WTC11 (cell line): ENCODE measurements at regions of chr10 and their contacts with region 1.

Region 1: GRCh38 chr10:86936661-86937501 is 20.5 kb downstream of the MMRN2 start:
- DNase-seq: peak; percentile 7
- ATAC-seq: no peak
- H3K4me3 Mint-ChIP-seq: no peak overlapping the region
- H3K27ac Mint-ChIP-seq: 0 out of 2 replicates have a peak overlapping the region, but pooled peaks have one; percentile 33
- H3K4me1 Mint-ChIP-seq: no peaks in the 10 kb centered on the region; the same call in 1 of the 2 replicates
- H3K27me3 Mint-ChIP-seq: no peaks in the 10 kb centered on the region
- CTCF ChIP-seq: no peak

Region 2: GRCh38 chr10:86868353-86868752 is 68.5 kb before region 1 on chr10:
- CTCF ChIA-PET with region 1: no interaction called
- POLR2A ChIA-PET with region 1: interaction called, 10 read pairs
- DNase-seq: peak; percentile 85
- ATAC-seq: peak; percentile 86
- H3K4me3 Mint-ChIP-seq: peak overlapping the region; percentile 22
- H3K27ac Mint-ChIP-seq: peak overlapping the region; percentile 99
- H3K4me1 Mint-ChIP-seq: peaks cover 90% of the 10 kb centered on the region
- H3K27me3 Mint-ChIP-seq: no peaks in the 10 kb centered on the region
- CTCF ChIP-seq: no peak

Region 3: DNA sequence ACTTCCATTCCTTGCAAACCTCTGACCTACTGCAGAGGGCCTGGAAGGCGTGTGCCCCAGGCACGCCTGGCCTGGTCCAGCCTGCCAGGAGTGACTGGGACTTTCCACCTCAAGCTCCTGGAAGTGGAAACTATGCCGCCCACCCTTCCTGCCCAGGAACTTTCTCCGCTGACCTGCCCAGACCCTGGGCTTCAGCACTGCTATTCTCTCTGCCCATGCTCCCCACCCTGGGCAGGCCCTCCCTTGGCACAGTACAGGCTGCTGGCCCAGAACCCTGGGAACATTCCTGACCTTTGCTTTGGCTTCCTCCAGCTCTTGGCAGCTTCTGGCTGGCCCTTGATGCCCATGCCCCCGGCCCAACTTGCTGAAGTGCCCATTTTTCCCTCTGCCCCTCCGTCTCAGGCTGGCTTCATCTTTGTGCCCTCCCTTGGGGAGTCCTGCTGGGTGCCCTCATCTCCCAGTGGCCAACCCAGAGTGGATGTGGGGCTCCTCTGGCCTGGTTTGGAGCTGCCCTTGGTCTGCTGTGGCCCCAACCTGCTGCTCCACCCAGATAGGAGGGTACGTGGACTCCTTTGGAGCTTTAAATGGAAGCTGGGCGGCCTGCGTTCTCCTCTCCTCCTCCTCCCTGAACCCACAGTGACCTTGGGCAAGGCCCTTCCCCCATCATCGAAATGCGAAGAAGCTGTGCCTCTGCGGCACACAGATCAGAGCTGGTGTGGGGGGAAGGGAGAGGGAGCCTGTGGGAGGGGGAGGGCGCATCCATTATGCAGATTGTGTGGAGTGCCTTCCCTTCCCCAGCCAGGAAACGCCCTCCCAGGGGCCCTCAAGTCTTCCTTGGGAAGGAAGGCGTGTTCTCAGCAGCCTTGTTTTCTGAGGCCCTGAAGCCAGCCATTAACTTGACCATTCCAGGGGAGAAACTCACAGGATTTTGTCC is 17.1 kb after region 1 on chr10:
- CTCF ChIA-PET with region 1: interaction called, 462 read pairs
- POLR2A ChIA-PET with region 1: interaction called, 11 read pairs
- DNase-seq: peak; percentile 90
- ATAC-seq: peak; percentile 89
- H3K4me3 Mint-ChIP-seq: peak overlapping the region; percentile 30; the same call in 1 of the 2 replicates
- H3K27ac Mint-ChIP-seq: peak overlapping the region; percentile 93
- H3K4me1 Mint-ChIP-seq: peaks cover 57% of the 10 kb centered on the region
- H3K27me3 Mint-ChIP-seq: no peaks in the 10 kb centered on the region; the same call in none of the 2 replicates
- CTCF ChIP-seq: no peak

Region 4: GRCh38 chr10:87093632-87094372 is 156.9 kb after region 1 on chr10:
- CTCF ChIA-PET with region 1: interaction called, 16 read pairs
- POLR2A ChIA-PET with region 1: no interaction called
- DNase-seq: peak; percentile 61
- ATAC-seq: peak; percentile 16
- H3K4me3 Mint-ChIP-seq: peak overlapping the region; percentile 90
- H3K27ac Mint-ChIP-seq: peak overlapping the region; percentile 94
- H3K4me1 Mint-ChIP-seq: peaks cover 40% of the 10 kb centered on the region
- H3K27me3 Mint-ChIP-seq: no peaks in the 10 kb centered on the region
- CTCF ChIP-seq: no peak